Right ventricle myocardium inferior (tissue), 1 donor: ENCODE measurements at regions of chr16 and their contacts with region 1.

Region 1: DNA sequence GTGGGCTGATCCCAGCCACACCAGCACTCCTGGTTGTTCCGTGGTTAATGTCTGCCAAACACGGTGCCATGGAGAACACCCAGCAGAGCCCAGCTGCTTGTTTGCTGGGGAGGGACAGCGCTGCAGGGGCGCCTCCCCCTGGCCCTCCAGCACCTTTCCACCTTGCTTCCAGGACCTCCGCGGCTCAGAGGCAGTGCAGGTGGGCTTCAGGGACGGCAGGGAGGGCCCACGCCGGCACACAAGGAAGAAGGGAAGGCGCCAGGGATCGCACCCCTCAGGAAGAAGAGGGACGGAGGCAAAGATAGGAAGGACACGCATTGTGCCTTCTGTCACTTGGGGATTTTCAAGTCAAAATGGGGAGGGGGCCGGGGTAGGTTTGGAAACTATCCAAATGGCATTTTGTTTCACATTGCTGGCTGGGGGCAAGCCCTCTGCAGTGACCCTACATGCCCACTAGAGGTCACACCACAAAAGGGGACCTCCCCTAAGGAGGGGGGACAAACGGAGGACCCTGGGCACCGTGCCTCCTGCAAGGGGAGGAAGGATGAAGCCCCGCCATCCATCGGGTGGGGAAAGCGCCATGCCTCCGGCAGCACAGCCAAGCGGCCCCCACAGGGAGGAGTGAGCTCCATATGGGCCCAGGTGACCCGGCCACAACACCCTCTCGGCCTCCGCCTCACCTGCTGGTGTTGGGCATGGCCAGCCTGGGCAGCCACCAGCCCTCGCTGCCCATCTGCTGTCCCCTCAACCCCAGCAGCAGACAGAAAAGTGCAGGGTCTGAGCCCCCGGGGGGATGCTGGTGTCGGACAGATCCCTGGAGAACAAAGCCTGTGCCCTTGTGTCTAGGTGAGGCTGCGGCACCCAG is 7.5 kb upstream of the C16orf95 start:
- DNase-seq: peak; percentile 71
- ATAC-seq: peak; percentile 55

Region 2: DNA sequence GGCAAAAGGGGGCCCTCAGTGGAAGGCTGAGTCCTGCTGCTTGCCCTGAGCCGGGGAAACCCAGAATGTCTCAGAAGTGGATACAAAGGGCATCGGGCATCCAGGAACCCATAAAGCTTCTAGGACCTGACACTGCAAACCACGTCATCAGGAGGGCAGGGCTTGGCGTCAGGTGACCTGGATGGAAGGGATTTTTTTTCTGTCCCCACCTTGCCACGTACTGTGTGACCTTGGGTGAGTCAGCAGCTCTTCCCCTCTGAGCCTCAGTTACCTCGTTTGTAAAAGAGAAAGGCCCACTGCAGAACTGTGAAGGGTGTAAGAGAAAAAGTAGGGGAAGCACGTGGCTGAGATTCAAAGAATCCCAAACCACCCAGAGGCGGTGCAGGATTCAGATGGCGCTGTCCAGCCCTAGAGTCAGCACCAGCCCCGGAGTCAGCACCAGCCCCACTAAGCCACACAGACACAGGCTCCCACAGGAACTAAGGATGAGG is 61.1 kb before region 1 on chr16:
- intact Hi-C with region 1: no loop called
- DNase-seq: no peak
- ATAC-seq: no peak

Region 3: DNA sequence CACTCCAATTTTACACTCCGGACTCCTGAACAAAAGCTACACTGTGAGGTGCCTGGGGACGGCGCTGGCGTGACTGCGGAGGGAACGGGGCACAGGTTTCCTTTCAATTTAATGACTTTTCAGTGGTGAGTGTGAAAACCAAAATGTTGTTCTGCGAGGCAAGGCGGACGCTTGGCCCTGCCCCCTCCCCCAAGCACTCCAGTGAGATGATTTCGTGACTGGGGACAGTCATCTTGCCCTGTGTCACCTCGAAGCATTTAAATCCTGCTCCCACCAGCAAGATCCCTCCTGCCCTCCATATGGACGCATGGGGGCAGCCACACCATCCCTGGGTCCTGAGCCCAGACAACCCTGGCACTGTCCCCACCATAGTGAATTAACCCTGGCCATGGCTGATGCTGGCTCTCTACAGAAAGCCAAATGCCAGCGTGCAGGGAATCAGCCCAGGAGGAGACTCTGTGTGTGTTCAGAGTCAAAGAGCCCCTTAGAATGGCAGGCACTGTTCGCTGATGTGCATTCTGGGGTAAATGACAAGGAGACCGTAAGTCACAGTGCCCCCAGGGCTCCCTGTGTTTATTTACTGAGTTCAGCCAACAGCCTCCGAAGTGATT is 48.4 kb before region 1 on chr16:
- intact Hi-C with region 1: no loop called
- DNase-seq: no peak
- ATAC-seq: no peak

Region 4: GRCh38 chr16:87358696-87359095 is 34.1 kb after region 1 on chr16:
- intact Hi-C with region 1: loop called (anchors 5 kb)
- DNase-seq: peak; percentile 48
- ATAC-seq: no peak

Region 5: DNA sequence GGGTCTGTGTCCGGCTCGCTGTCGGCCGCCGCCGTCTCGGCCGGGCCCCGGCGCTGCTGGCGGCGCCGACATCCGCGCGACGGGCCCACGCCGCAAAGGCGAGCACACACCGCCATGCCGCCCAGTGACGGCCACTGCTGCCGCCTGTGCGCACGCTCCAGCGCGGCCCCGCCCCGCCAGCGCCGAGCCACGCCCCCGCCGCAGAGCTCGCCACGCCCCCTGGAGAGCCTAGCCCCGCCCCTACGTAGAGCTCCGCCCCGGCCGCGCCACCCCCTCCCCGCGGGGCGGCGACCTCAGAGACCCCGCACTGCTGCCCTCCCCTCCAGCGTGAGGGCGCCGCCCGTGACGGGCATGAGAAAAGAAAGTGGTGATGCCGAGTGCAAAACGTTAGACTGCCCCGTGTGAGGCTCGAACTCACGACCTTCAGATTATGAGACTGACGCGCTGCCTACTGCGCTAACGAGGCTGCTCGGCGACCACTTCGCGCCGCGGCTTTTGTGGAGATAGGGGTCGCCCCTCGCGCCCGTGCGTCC is 59.1 kb after region 1 on chr16 and contains the start of gene FBXO31:
- intact Hi-C with region 1: loop called (anchors 2 kb)
- DNase-seq: peak; percentile 93
- ATAC-seq: peak; percentile 91
- total RNA-seq, gene FBXO31: 70.2 TPM

Region 6: DNA sequence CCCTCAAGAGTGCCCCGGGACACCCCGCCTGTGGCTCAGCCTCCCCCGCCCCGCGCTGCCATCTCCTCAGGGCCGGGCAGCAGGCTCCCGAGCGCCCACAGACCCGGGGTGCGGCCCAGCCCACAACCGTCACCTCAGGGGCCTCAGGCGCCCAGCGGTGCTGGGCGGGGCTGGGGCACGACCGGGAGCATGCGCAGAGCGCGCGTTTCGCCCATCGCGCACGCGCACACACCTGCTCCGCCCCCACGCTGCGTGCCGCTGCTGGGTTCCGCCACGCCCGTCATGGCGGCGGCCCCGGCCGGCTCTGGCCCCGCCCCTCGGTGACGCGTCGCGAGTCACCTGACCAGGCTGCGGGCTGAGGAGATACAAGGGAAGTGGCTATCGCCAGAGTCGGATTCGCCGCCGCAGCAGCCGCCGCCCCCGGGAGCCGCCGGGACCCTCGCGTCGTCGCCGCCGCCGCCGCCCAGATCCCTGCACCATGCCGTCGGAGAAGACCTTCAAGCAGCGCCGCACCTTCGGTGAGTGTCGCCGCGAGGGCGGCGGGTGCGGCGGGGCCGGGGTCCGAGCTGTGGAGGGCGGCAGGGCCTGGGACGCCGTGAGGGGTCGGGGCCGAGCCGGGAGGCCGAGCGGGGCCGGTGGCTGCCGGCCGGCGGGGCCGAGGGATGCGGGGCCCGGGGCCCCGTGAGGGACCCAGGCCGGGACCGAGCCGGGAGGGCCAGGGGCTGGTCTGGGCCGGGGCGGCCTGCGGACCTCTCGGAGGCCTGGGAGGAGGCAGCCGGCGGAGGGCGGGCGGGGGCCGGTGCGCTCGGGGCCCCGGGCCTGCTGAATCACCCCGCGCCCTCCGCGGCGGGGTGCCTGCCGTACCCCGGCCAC is 67.5 kb after region 1 on chr16 and contains the start of gene MAP1LC3B:
- intact Hi-C with region 1: loop called (anchors 2 kb)
- DNase-seq: peak; percentile 98
- ATAC-seq: peak; percentile 94
- total RNA-seq, gene MAP1LC3B: 125 TPM